ENCODE measurements at regions of chr19 and their contacts with region 1.

Region 1: DNA sequence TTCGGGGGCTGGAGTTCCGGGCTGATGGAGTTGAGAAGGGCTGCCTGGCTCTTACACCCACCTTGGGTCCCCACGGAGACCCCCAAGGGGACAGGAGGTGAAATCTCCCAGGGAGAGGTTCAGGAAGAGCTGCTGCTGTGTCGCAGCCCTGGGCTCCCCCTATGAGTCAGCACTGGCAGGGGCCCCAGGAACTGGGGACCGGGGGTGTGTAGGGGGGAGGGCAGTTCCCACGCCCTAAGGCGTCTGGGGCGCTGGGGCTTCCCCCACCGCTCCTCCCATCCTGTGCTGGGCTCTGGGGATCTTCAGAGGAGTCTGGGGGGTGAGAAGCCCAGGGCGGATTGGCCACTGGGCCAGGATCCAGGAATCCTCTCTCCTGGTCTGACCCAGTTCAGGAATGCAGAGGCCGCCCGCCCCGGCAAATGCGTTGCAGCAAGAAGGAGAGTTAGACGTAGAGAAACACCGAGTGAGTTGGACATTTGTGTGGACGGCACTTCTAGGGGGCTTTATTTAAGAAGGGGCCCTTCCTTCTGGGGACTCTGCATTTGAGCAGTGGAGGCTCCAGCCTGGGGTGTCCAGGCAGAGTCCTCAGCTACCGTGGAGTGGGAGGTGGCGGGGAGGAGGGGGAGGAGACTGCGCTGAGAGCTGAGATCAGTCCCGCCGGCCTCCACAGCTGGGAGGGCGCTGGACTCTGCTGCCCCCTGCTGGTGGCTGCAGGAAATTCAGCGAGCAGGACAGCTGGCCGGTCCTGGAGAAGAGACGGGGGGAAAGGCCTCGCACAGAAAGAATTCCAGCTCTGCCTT is 15.0 kb upstream of the NANOS3 start:
- DNase-seq: peak; percentile 96
- ATAC-seq: peak; percentile 93

Region 2: GRCh38 chr19:13784731-13785452 is 77.0 kb before region 1 on chr19:
- intact Hi-C with region 1: loop called (anchors 5 kb)
- DNase-seq: peak; percentile 85
- ATAC-seq: peak; percentile 69